HCT116 (cell line): ENCODE measurements at regions of chr9 and their contacts with region 1.

Region 1: DNA sequence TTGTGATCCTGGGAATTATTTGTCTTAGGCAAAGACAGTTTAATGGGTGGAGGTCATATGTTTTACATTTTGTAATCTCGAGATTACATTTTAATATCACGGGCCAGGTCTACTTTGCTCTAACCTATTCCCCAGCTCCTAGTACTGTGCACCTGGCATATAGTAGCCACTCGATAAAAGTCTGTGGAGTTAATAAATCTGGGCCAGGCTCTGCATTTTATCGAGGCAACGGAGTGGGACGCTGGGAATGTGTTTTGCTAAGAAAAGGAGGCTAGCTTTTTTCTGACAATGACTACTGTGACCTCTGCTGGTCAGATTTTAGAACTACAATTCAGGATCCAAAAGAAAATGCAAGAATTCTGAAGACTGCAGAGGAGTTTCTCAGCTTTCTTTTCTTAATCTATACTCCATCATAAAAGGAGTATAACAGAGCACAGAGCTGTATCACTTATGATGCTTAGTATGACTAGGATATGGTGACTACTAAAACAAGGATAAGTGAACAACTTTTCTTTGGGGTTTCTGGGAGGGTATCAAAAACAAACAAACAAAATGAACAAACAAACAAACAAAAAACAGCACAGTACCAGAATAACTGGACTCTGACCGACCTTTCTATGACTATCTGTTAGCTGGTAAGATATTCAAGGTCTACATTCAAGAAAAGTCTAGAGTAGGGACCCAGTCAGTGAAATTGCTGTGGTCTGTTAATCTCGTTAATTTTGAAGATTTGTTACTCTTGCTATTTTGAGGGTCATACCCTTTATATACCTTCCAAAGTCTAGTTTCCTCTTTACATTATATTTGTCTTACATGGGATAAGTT is 46.1 kb upstream of the CER1 start:
- DNase-seq: peak; percentile 42
- ATAC-seq: peak; percentile 72
- H3K4me3 ChIP-seq: no peak overlapping the region
- H3K27ac ChIP-seq: no peak overlapping the region
- H3K4me1 ChIP-seq: no peaks in the 10 kb centered on the region
- H3K27me3 ChIP-seq: peaks cover 39% of the 10 kb centered on the region; the same call in 1 of the 2 replicates
- CTCF ChIP-seq: peak; percentile 57 to 80 (median 58); a peak in 5 of 6 replicates
- POLR2A ChIP-seq: no peak
- RAD21 ChIP-seq: peak; percentile 72

Region 2: DNA sequence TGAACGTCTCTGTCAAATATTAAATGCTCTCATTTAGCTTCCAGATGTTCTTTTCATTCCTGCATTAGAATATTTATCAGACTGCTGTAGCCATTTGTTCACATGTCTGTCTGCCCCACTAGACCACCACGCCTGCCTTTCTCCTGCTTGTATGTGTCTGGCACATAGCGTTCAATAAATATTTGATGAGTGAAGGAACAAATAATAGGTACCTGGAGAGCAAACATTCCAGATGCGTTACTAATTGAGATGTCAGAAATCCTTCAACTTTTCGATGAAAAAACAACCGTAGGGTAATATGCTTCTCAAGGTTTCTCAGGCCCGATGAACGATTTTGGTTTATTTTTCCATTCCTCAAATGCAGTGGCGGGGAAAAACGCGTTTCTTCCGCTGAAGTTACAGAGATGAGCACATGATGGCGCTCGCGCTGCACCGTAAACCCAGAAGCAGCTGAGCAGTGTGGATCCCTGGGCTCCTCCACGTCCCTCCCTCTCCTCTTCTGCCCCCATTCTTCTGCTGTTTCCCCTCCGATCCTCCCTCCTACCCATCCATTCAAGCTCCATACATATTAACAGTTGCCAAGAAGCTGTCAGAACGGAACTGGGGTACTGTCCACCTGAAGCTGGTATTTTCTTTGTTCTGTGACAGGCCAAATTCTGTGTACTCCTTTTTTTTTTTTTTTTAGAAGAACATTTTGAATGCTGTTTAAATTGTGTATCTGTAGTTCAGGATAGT is 1734.5 kb before region 1 on chr9:
- CTCF ChIA-PET with region 1: no interaction called
- POLR2A ChIA-PET with region 1: no interaction called
- RAD21 ChIA-PET with region 1: no interaction called
- intact Hi-C with region 1: loop called (anchors 5 kb)
- DNase-seq: peak; percentile 51
- ATAC-seq: peak; percentile 97
- H3K4me3 ChIP-seq: no peak overlapping the region
- H3K27ac ChIP-seq: no peak overlapping the region
- H3K4me1 ChIP-seq: no peaks in the 10 kb centered on the region; a peak in 1 of 4 replicates
- H3K27me3 ChIP-seq: peaks cover 4% of the 10 kb centered on the region; the same call in 1 of the 2 replicates
- CTCF ChIP-seq: peak; percentile 46 to 78 (median 66); a peak in 5 of 6 replicates
- POLR2A ChIP-seq: no peak
- RAD21 ChIP-seq: peak; percentile 86

Region 3: GRCh38 chr9:13427587-13427986 is 1341.0 kb before region 1 on chr9:
- CTCF ChIA-PET with region 1: interaction called, 5 read pairs
- POLR2A ChIA-PET with region 1: no interaction called
- RAD21 ChIA-PET with region 1: interaction called in 1 of 2 experiments, 3 read pairs
- intact Hi-C with region 1: loop called (anchors 5 kb)
- DNase-seq: no peak
- ATAC-seq: no peak
- H3K4me3 ChIP-seq: no peak overlapping the region
- H3K27ac ChIP-seq: no peak overlapping the region
- H3K4me1 ChIP-seq: no peaks in the 10 kb centered on the region
- H3K27me3 ChIP-seq: no peaks in the 10 kb centered on the region
- CTCF ChIP-seq: peak; percentile 33 to 69 (median 47); a peak in 5 of 6 replicates
- POLR2A ChIP-seq: no peak
- RAD21 ChIP-seq: peak; percentile 62

Region 4: DNA sequence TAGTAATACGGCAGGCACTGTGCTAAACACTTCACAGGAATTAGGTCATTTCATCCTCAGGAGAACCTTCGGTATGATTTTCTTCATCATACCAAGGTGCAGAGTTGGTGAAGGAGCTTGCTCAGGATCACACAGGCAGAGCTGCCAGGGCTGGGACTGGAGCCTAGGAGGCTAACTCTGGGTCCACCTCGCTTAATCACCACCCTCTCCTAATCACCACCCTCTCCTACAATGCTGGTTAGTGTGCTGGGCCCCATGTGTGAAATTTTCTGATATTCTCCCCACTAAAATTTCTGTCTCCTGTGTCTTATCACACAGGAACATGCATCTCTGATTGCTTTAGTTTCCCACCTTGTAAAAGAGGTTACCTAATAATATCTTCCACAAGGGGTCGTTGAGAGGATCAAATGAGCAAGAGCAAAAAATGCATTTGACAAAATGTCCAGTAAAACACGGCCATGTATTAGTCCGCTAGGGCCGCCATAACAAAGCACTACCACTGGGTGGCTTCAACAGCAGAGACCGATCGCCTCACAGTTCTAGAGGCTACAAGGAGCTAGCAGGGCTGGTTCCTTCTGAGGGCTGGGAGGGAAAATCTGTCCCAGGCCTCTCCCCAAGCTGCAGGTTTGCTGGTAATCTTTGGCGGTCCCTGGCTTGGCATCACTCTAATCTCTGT is 326.5 kb before region 1 on chr9:
- CTCF ChIA-PET with region 1: interaction called, 22 read pairs
- POLR2A ChIA-PET with region 1: no interaction called
- RAD21 ChIA-PET with region 1: interaction called in 1 of 2 experiments, 4 read pairs
- intact Hi-C with region 1: loop called (anchors 1 kb)
- DNase-seq: peak; percentile 72
- ATAC-seq: peak; percentile 100
- H3K4me3 ChIP-seq: no peak overlapping the region
- H3K27ac ChIP-seq: no peak overlapping the region
- H3K4me1 ChIP-seq: no peaks in the 10 kb centered on the region
- H3K27me3 ChIP-seq: no peaks in the 10 kb centered on the region
- CTCF ChIP-seq: peak; percentile 60 to 77 (median 71); a peak in 5 of 6 replicates
- POLR2A ChIP-seq: no peak
- RAD21 ChIP-seq: peak; percentile 40

Region 5: GRCh38 chr9:14616188-14616982 is 152.2 kb before region 1 on chr9:
- CTCF ChIA-PET with region 1: interaction called, 10 read pairs
- POLR2A ChIA-PET with region 1: no interaction called
- RAD21 ChIA-PET with region 1: interaction called in 1 of 2 experiments, 3 read pairs
- intact Hi-C with region 1: loop called (anchors 1 kb)
- DNase-seq: peak; percentile 32
- ATAC-seq: peak; percentile 64; the same call in 1 of the 2 replicates
- H3K4me3 ChIP-seq: no peak overlapping the region
- H3K27ac ChIP-seq: no peak overlapping the region
- H3K4me1 ChIP-seq: no peaks in the 10 kb centered on the region
- H3K27me3 ChIP-seq: no peaks in the 10 kb centered on the region
- CTCF ChIP-seq: peak; percentile 57 to 73 (median 59); a peak in 5 of 6 replicates
- POLR2A ChIP-seq: no peak
- RAD21 ChIP-seq: peak; percentile 60